Gastrocnemius medialis (tissue), 4 donors: ENCODE measurements at regions of chr17 and their contacts with region 1.

Region 1: DNA sequence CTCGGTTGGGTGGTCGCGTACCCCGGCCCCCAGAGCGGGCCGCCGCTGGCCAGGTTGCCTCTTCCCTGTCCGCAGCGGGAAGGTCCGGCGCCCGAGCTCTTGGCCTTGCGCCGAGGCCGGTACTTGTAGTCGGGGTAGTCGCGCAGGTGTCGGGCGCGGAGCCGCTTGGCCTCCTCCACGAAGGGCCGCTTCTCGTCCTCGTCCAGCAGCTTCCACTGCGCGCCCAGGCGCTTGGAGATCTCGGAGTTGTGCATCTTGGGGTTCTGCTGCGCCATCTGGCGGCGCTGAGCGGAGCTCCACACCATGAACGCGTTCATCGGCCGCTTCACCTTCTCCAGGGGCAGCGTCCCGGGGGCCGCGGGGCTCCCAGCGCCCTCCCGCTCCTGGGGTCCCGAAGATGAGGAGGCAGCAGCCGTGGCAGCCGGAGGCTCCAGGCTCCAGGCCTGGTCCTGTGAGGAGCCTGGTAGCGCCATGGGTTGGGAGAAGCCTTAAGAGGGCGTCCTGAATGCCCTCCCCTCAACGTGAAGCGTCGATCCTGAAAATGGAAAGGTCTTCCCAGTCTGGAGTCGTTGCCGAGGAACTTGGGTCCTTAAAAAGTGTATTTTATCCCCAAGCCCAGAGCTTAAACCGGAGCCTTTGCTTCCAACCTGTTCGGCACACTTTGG is 558 bp downstream of the SOX15 start:
- DNase-seq: peak; percentile 56 to 87
- ATAC-seq: peak; percentile 77 to 79
- H3K4me3 ChIP-seq: peak overlapping the region; percentile 42 to 59 (median 50)
- H3K27ac ChIP-seq: peak overlapping the region; percentile 64 to 81 (median 78)
- H3K4me1 ChIP-seq: peaks cover 23 to 36% of the 10 kb centered on the region in 2 donors
- H3K27me3 ChIP-seq: no peaks in the 10 kb centered on the region
- CTCF ChIP-seq: peak; percentile 79 to 94 (median 92)
- POLR2A ChIP-seq: no peak

Region 2: GRCh38 chr17:7515911-7516610 is 73.3 kb before region 1 on chr17:
- in situ Hi-C with region 1: no loop called
- intact Hi-C with region 1: loop called (anchors 2 kb)
- DNase-seq: no peak
- ATAC-seq: no peak
- H3K4me3 ChIP-seq: no peak overlapping the region
- H3K27ac ChIP-seq: no peak overlapping the region
- H3K4me1 ChIP-seq: no peaks in the 10 kb centered on the region
- H3K27me3 ChIP-seq: no peaks in the 10 kb centered on the region
- CTCF ChIP-seq: no peak
- POLR2A ChIP-seq: no peak

Region 3: GRCh38 chr17:7552621-7553051 is 36.7 kb before region 1 on chr17:
- in situ Hi-C with region 1: no loop called
- intact Hi-C with region 1: no loop called
- DNase-seq: no peak
- ATAC-seq: no peak
- H3K4me3 ChIP-seq: no peak overlapping the region
- H3K27ac ChIP-seq: no peak overlapping the region
- H3K4me1 ChIP-seq: peaks cover 9 to 18% of the 10 kb centered on the region in 2 donors
- H3K27me3 ChIP-seq: no peaks in the 10 kb centered on the region
- CTCF ChIP-seq: no peak
- POLR2A ChIP-seq: no peak